Sigmoid colon (tissue), 7 donors: ENCODE measurements at regions of chr1 and their contacts with region 1.

Region 1: GRCh38 chr1:206583707-206584648 is 28.3 kb downstream of the EIF2D start:
- DNase-seq: peak; percentile 79
- H3K4me3 ChIP-seq: no peak overlapping the region
- H3K27ac ChIP-seq: no peak overlapping the region
- H3K4me1 ChIP-seq: peaks cover 0 to 20% (median 7%) of the 10 kb centered on the region in 4 donors
- H3K27me3 ChIP-seq: no peaks in the 10 kb centered on the region
- CTCF ChIP-seq: peak; percentile 59 to 87 (median 82)
- EP300 ChIP-seq: no peak
- POLR2A ChIP-seq: no peak

Region 2: DNA sequence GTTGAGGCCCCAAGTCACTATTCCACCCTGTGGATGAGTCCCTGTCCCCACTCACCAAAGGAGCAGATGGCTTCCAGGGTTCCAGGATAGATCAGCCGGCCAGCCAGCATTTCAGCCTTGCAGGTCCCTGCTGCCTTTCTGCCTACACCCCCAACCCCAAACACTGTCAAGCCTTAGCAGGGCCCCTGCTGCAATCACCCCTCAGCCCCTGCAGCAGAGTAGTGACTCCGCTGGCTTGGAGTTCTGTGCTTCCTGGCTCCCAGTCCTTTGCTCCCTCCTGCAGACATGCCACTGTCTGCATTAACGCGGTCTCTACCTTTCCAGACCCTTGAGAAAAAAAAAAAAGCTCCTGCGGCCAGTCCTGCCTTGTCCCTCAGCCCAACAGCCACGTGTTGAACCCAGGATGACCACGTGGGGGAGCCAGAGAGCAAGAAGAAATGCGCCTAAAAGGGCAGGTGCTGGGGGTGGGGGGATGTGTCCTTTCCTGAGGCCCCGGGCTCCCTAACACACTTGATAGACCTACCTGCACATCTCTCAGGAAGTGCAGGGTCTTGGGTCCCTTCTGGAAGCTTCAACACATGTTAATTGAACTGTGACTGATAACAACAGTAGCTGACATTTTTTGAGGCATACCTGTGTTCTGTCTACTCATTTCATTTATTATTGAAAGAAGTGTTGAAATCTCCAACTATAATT is 39.3 kb before region 1 on chr1:
- intact Hi-C with region 1: loop called (anchors 1 kb)
- DNase-seq: peak; percentile 74
- H3K4me3 ChIP-seq: no peak overlapping the region
- H3K27ac ChIP-seq: no peak overlapping the region
- H3K4me1 ChIP-seq: peaks cover 0 to 10% (median 7%) of the 10 kb centered on the region in 4 donors
- H3K27me3 ChIP-seq: no peaks in the 10 kb centered on the region
- CTCF ChIP-seq: peak; percentile 21 to 90 (median 60)
- EP300 ChIP-seq: no peak
- POLR2A ChIP-seq: no peak

Region 3: DNA sequence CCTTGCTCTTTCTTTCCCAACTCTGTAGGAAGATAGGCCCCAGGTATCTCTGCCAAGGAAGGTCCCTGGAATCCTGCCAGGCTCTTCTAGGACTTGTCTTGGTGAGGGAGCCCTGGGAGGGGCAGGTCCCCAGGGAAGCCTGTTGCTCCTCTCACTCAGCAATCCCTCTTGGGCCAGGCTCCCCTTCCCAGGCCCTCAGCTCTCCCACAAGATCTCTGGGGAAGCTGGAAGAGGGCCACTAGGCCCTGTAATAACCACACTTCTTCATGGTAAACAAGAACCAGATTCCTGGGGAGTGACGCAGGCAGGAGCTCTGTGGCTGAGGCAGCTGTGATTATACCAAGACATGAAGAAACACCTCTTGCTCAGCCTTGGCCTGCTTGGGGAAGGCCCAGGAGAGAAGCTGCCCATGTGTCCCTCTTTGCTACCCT is 90.8 kb after region 1 on chr1:
- intact Hi-C with region 1: no loop called
- DNase-seq: peak; percentile 97
- H3K4me3 ChIP-seq: no peak overlapping the region
- H3K27ac ChIP-seq: peak overlapping the region; percentile 77 to 92 (median 83)
- H3K4me1 ChIP-seq: peaks cover 0 to 46% (median 27%) of the 10 kb centered on the region in 4 donors
- H3K27me3 ChIP-seq: no peaks in the 10 kb centered on the region
- CTCF ChIP-seq: no peak
- EP300 ChIP-seq: peak in 2 of 4 donors; percentile 54 to 80
- POLR2A ChIP-seq: no peak